ENCODE measurements at regions of chr17 and their contacts with region 1.

Region 1: DNA sequence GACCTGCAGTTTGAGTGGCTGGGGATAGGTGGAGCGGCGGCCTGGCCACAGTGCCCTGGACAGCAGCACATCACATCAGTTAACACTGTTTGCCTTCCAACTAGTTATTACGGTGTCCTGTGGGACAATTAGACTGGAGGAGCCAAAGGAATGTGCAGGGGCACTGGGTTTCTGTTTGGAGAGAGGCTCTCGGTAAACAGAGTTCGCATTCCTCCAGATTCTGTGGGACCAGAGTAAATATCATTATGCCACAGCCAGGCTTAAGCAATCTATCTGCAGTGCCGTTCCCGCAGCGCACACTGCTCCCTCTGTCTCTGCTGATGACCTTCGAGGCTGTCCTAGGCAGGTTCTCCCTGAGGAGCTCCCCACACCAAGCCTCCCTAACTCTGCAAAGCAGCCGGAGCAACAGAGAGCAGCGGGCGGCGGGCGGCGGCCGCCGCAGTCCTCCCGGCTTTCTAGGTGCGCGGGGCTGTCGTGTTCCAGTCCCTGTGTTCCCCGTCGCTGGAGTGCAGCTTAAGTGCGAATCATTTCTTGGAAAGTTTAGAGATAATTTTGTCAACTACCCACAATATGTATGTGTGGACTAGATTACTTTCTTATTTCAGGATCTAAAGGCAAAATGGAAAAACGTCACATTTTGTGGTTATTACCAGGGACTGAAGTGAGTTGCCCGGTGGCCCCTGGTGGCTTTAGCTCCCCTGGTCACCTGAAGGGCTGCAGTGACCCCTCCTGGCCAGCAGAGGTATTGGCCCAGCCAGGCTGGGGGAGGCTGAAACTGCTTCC is 43.2 kb downstream of the PGS1 start:
- DNase-seq: peak; percentile 66 to 86 (median 77)
- ATAC-seq: peak; percentile 58 to 77 (median 72)
- H3K4me3 ChIP-seq: no peak overlapping the region
- H3K27ac ChIP-seq: peak overlapping the region in 3 of 12 donors; percentile 27 to 98 (median 33)
- H3K4me1 ChIP-seq: peaks cover 0 to 58% (median 36%) of the 10 kb centered on the region in 12 donors
- H3K27me3 ChIP-seq: no peaks in the 10 kb centered on the region
- CTCF ChIP-seq: peak; percentile 97 to 100 (median 99)
- POLR2A ChIP-seq: no peak

Region 2: DNA sequence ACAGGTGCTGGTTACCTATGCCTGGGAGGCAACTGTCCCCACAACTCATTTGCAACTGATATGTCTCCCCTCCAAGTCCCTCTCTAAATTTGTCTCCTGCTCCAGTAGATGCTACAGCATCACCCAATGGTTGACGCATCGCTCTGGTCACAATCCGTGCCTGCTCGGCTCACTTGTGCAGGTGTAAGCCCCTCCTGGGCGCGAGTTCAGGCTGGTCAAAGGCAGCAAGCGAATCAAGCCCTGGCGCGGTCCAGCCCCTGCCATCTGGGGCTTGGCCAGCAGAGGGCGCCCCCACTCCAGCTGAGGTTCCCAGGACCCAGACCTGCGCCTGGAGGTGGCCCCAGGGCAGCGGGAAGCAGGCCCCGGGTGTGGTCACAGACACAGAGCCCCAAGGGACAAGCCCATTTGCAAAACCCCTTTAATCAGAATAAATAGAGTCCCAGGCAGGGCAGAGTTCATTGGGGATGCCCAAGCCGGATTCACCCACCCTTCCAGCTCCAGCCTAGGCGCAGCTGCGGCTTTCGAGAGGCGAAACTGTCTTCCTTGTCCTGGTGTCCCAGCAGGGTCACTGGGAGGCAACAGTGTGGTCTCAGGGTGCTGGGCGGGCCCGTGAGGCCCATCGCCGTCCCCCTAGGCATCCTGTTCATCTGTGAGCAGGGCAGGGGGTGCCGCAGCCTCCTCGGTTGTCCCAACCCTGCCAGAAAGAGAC is 309.0 kb before region 1 on chr17:
- intact Hi-C with region 1: loop called in 6 of 10 experiments (anchors 5 to 10 kb)
- DNase-seq: peak; percentile 73 to 92 (median 81)
- ATAC-seq: peak; percentile 27 to 66 (median 62)
- H3K4me3 ChIP-seq: no peak overlapping the region
- H3K27ac ChIP-seq: peak overlapping the region in 7 of 12 donors; percentile 1 to 54 (median 31)
- H3K4me1 ChIP-seq: peaks cover 0 to 63% (median 28%) of the 10 kb centered on the region in 12 donors
- H3K27me3 ChIP-seq: no peaks in the 10 kb centered on the region
- CTCF ChIP-seq: peak; percentile 99 to 100 (median 99)
- POLR2A ChIP-seq: no peak

Region 3: DNA sequence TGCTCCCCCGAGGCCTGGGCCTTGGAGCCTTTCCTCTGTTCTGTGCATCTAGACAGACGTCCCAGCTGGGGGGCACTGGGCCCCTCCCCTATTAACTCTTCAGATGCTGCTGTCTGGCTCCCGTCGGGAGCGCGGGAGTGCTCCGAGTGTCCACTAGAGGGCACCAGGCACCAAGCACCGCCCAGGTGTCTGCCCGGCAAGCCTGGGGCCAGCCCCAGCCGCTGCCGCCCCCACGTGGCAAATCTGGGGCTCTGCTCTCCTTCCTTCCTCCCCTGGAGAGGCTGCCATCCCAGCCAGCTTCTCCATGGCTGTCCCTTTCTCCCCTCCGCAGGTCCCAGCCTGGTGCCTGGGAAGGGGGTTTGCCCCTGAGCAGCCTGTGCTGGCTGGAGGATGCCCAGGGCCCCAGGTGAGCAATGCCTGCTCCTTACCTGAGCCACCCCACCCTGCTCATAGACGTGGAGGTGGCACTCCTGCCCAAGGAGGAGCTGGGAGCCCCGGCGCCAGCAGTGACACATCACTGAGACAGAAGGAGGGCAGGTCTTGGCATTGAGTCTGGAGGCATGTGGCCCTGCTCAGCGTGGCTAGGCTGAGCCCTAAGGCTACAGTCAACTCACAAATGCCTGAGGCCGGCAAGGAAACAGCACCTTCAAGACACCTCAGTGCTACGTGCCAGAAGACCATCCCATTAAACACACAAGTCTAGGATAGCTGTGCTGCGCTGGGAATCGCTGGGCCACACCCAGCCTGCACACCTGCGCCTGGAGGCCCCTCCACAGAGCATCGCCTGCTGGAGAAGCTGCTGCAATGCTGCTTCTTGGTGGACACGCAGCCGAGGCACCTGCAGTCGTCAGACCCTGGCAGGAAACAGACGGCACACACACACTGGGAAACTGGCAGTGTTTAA is 170.5 kb before region 1 on chr17:
- intact Hi-C with region 1: loop called in 9 of 10 experiments (anchors 1 to 5 kb)
- DNase-seq: peak; percentile 83 to 93 (median 86)
- ATAC-seq: peak; percentile 60 to 80 (median 76)
- H3K4me3 ChIP-seq: peak overlapping the region in 2 of 12 donors; percentile 18 to 38
- H3K27ac ChIP-seq: peak overlapping the region in 1 of 12 donors; percentile 64
- H3K4me1 ChIP-seq: peaks cover 0 to 45% (median 13%) of the 10 kb centered on the region in 12 donors
- H3K27me3 ChIP-seq: no peaks in the 10 kb centered on the region
- CTCF ChIP-seq: peak; percentile 97 to 100 (median 100)
- POLR2A ChIP-seq: peak in 1 of 2 donors; percentile 19

Region 4: DNA sequence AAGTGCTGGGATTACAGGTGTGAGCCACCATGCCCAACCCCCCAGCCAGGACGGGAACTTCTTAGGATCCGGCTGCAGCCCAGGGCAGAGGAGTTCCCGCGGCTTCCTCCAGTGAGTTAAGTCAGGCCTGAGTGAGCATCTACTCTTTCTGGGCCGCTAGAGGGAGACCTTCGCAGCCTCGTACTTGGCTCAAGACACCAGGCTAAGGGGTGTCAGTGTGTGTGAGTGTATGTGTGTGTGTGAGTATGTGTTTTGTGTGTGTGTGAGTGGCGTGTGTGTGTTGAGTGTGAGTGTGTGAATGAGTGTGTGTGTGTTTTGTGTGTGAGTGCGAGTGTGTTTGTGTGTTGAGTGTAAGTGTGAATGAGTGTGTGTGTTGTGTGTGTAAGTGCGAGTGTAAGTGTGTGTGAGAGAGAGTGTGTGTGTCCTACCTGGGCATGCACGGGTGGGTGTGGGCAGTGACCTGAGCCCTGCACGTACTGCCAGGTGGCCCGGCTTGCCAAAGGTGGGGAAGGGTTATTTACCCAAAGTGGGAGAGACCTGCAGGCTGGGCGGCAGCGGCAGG is 131.8 kb before region 1 on chr17:
- intact Hi-C with region 1: loop called (anchors 1 to 5 kb)
- DNase-seq: peak; percentile 81 to 85 (median 84)
- ATAC-seq: peak; percentile 79 to 93 (median 92)
- H3K4me3 ChIP-seq: no peak overlapping the region
- H3K27ac ChIP-seq: no peak overlapping the region
- H3K4me1 ChIP-seq: peaks cover 0 to 22% (median 4%) of the 10 kb centered on the region in 12 donors
- H3K27me3 ChIP-seq: no peaks in the 10 kb centered on the region
- CTCF ChIP-seq: peak; percentile 54 to 83 (median 72)
- POLR2A ChIP-seq: no peak

Region 5: DNA sequence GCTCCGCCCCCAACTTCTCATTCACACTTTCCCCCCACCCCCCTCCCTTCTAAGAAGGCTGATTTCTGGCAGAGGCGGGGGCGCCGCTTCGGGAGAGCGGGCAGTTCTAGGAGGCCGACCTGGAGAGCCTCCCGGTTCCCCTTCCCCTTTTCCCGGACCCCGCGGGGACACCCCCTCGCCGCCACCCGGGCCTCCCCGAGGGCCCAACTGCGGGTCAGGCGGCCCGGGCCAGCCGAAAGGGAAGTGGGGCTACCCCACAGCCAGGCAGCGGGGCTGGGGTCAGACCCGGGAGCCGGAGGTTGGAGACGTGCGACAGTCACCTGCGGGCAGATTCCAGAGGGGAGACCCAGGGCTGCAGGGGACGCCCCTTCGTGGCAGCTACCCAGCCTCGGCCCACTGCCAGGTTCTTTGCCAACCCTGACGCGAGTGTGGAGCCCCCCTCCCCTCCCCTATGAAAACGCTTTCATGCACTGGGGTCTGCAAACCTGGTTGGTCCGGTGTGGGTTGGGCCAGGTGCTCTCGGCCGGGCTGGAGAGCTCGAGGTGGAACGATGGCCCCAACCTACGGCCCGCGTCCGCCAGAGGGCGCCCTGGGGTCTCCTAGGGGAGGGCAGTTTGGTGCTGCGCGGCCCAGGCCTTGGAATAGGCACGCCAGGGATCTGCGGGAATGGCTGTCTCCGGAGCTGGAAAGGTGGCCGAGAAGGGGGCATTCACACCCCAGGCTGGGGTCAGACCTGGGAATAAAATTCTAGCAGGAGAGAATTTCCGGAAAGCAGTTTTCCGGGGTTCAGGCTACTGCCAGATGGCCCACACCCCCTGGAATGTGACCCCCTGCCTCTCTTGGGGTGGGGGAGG is 61.1 kb before region 1 on chr17:
- intact Hi-C with region 1: loop called (anchors 1 to 5 kb)
- DNase-seq: peak; percentile 92 to 97 (median 94)
- ATAC-seq: peak; percentile 70 to 77 (median 72)
- H3K4me3 ChIP-seq: peak overlapping the region in 11 of 12 donors; percentile 37 to 97 (median 80)
- H3K27ac ChIP-seq: peak overlapping the region; percentile 85 to 100 (median 96)
- H3K4me1 ChIP-seq: peaks cover 0 to 57% (median 41%) of the 10 kb centered on the region in 12 donors
- H3K27me3 ChIP-seq: no peaks in the 10 kb centered on the region
- CTCF ChIP-seq: peak; percentile 82 to 96 (median 93)
- POLR2A ChIP-seq: no peak

Region 6: DNA sequence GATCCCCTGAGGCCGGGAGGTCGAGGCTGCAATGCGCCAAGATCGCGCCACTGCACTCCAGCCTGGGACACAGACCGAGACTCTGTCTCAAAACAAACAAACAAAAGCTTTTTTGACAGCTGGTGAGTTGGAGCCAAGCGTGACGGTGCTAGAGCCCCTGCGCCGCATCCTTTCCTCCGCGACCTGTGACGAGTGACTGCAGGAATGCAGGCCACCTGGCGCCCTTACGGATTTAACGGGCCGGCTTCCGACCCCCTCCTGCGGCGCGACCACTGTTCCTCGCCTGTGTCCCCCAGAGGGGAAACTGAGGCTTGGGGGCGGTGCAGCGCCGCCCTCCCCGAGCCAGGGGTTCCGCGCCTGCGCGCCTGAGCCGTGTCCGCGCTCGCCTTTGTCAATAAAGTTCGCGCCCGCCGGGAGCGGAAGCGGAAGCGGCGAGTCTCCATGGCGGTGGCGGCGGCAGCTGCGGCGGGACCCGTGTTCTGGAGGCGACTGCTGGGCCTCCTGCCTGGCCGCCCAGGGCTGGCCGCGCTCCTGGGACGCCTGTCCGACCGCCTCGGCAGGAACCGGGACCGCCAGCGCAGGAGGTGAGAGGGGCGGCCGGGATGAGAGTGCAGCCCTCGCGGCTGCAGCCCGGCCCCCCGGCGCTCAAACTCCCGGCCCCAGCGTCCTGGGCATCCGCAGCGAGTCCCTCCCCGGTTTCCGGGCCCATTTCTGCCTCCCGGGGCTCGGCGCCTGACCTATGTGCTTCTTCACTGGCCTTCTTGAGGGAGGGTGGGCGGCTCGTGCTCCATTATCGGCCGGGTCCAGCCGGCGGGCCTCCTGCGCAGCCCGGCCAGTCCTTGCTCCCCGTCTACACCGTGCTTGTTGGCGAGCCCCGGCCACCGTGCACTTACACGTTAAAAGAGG is 43.2 kb before region 1 on chr17 and contains the start of gene PGS1:
- intact Hi-C with region 1: loop called in 5 of 10 experiments (anchors 2 to 5 kb)
- DNase-seq: peak; percentile 82 to 94 (median 86)
- ATAC-seq: peak; percentile 23 to 92 (median 83)
- H3K4me3 ChIP-seq: peak within 1 kb of the TSS; percentile 68 to 99 (median 94)
- H3K27ac ChIP-seq: peak within 1 kb of the TSS; percentile 66 to 98 (median 86)
- H3K4me1 ChIP-seq: peaks cover 7 to 94% (median 45%) of the 10 kb centered on the region in 12 donors
- H3K27me3 ChIP-seq: no peaks in the 10 kb centered on the region
- CTCF ChIP-seq: no peak
- POLR2A ChIP-seq: peak in 1 of 2 donors; percentile 83
- total RNA-seq, gene PGS1: 14.2 to 32.8 (median 17.3) TPM

Region 7: GRCh38 chr17:78383725-78384471 is 37.8 kb before region 1 on chr17:
- intact Hi-C with region 1: loop called in 4 of 10 experiments (anchors 5 kb)
- DNase-seq: peak; percentile 68 to 89 (median 78)
- ATAC-seq: peak; percentile 61 to 87 (median 78)
- H3K4me3 ChIP-seq: peak overlapping the region in 1 of 12 donors; percentile 12
- H3K27ac ChIP-seq: peak overlapping the region; percentile 22 to 98 (median 71)
- H3K4me1 ChIP-seq: peaks cover 20 to 100% (median 85%) of the 10 kb centered on the region in 12 donors
- H3K27me3 ChIP-seq: no peaks in the 10 kb centered on the region
- CTCF ChIP-seq: no peak
- POLR2A ChIP-seq: no peak

Region 8: DNA sequence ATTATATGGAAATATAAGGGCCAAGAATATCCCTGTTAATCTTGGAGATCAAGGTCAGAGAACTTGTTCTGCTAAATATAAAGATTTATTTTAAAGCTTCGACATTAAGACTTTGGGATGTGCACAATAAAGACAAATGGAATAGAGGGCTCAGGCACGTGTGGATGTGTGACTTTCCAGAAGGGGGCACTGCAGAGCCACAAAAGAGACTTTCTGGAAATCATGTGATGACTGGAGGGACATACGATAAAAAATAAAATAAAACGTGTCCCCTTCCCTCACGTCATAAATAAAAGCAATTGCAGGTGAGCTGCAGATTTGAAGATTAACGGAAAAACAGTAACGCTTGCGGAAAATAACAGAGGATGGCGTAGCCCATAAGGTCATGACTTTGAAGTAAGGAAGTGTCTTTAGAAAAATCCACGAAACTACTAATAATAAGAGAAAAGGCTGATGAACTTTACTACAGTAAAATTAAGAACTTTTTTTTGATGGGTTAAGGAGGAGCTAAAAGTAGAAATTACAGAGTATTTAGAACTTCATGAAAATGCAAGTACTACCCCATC is 643.5 kb after region 1 on chr17:
- intact Hi-C with region 1: no loop called
- DNase-seq: no peak
- ATAC-seq: no peak
- H3K4me3 ChIP-seq: no peak overlapping the region
- H3K27ac ChIP-seq: no peak overlapping the region
- H3K4me1 ChIP-seq: peaks cover 0 to 3% (median 0%) of the 10 kb centered on the region in 12 donors
- H3K27me3 ChIP-seq: no peaks in the 10 kb centered on the region
- CTCF ChIP-seq: peak; percentile 41 to 72 (median 62)
- POLR2A ChIP-seq: no peak

Measured in heart left ventricle (tissue), 16 donors.